PC-9 (cell line): ENCODE measurements at regions of chr5 and their contacts with region 1.

Region 1: GRCh38 chr5:34587355-34588241 is 68.5 kb upstream of the RAI14 start:
- DNase-seq: peak in 1 of 2 experiments; percentile 86
- H3K4me3 ChIP-seq: peak overlapping the region; percentile 51
- H3K27ac ChIP-seq: peak overlapping the region; percentile 97
- H3K4me1 ChIP-seq: peaks cover 76% of the 10 kb centered on the region
- H3K27me3 ChIP-seq: no peaks in the 10 kb centered on the region
- CTCF ChIP-seq: no peak

Region 2: GRCh38 chr5:34547300-34548085 is 40.1 kb before region 1 on chr5:
- CTCF ChIA-PET with region 1: no interaction called
- POLR2A ChIA-PET with region 1: no interaction called
- intact Hi-C with region 1: no loop called
- DNase-seq: no peak
- H3K4me3 ChIP-seq: no peak overlapping the region
- H3K27ac ChIP-seq: no peak overlapping the region
- H3K4me1 ChIP-seq: no peaks in the 10 kb centered on the region
- H3K27me3 ChIP-seq: no peaks in the 10 kb centered on the region
- CTCF ChIP-seq: no peak

Region 3: GRCh38 chr5:34563951-34564709 is 23.5 kb before region 1 on chr5:
- CTCF ChIA-PET with region 1: no interaction called
- POLR2A ChIA-PET with region 1: no interaction called
- intact Hi-C with region 1: loop called (anchors 1 kb)
- DNase-seq: peak; percentile 77 to 85
- H3K4me3 ChIP-seq: no peak overlapping the region
- H3K27ac ChIP-seq: peak overlapping the region; percentile 64
- H3K4me1 ChIP-seq: peaks cover 20% of the 10 kb centered on the region
- H3K27me3 ChIP-seq: no peaks in the 10 kb centered on the region
- CTCF ChIP-seq: no peak

Region 4: GRCh38 chr5:34598177-34598794 is 10.7 kb after region 1 on chr5:
- CTCF ChIA-PET with region 1: interaction called, 6 read pairs
- POLR2A ChIA-PET with region 1: interaction called, 25 read pairs
- intact Hi-C with region 1: loop called (anchors 1 kb)
- DNase-seq: peak; percentile 69 to 98
- H3K4me3 ChIP-seq: peak overlapping the region; percentile 6; the same call in 1 of the 2 replicates
- H3K27ac ChIP-seq: peak overlapping the region; percentile 88
- H3K4me1 ChIP-seq: peaks cover 43% of the 10 kb centered on the region
- H3K27me3 ChIP-seq: no peaks in the 10 kb centered on the region
- CTCF ChIP-seq: no peak

Region 5: GRCh38 chr5:34608859-34609648 is 21.5 kb after region 1 on chr5:
- CTCF ChIA-PET with region 1: no interaction called
- POLR2A ChIA-PET with region 1: interaction called, 9 read pairs
- intact Hi-C with region 1: loop called (anchors 1 kb)
- DNase-seq: peak; percentile 43 to 94
- H3K4me3 ChIP-seq: peak overlapping the region; percentile 12; the same call in 1 of the 2 replicates
- H3K27ac ChIP-seq: peak overlapping the region; percentile 82
- H3K4me1 ChIP-seq: peaks cover 39% of the 10 kb centered on the region
- H3K27me3 ChIP-seq: no peaks in the 10 kb centered on the region
- CTCF ChIP-seq: no peak

Region 6: DNA sequence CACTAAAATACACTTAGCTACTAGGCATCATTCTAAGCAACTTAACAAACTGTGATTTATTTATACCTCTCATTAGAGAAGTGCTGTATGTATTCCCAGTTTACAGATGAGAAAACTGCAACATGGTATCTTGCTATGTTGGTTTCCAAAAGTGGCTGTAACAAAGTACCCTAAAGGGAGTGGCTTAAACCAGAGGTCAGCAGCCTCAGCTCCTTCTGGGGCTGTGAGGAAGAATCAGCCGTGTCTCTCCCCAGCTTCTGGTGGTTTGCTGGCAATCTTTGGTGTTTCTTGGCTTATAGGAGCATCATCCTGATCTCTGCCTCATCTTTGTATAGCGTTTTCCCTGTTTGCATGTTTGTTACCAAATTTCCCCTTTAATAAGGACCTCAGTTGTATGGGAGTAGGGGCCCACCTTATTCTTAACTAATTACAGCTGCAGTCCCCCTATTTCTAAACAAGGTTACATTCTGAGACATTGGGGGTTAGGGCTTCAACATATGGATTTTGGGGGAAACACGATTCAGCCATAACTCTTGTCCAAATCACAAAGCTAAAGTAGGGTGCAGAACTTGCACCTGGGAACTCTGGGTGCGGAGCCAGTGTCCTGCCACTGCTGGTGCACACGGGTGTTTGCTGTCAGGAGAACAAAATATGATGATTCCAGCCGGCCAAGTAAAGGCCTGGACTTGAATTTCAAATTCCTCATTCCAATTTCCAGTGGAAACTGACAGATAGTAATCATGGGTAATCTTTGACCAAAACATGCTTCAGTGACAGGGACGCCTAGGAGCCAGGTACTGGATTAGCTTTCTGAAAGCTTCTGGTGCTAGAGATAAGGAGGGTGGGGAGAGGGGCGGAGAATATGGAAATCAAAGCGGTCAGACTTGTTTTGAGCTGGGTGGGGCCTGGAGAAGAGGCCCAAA is 111.8 kb after region 1 on chr5:
- CTCF ChIA-PET with region 1: no interaction called
- POLR2A ChIA-PET with region 1: interaction called, 11 read pairs
- intact Hi-C with region 1: no loop called
- DNase-seq: peak in 1 of 2 experiments; percentile 76
- H3K4me3 ChIP-seq: no peak overlapping the region
- H3K27ac ChIP-seq: peak overlapping the region; percentile 16; the same call in 1 of the 2 replicates
- H3K4me1 ChIP-seq: peaks cover 46% of the 10 kb centered on the region
- H3K27me3 ChIP-seq: no peaks in the 10 kb centered on the region
- CTCF ChIP-seq: no peak

Region 7: GRCh38 chr5:34915139-34915855 is 327.7 kb after region 1 on chr5 and contains the starts of genes BRIX1 and RAD1:
- CTCF ChIA-PET with region 1: no interaction called
- POLR2A ChIA-PET with region 1: no interaction called
- intact Hi-C with region 1: loop called (anchors 5 kb)
- DNase-seq: peak; percentile 95 to 100
- H3K4me3 ChIP-seq: peak within 1 kb of the TSS; percentile 81
- H3K27ac ChIP-seq: peak within 1 kb of the TSS; percentile 73
- H3K4me1 ChIP-seq: peaks cover 42% of the 10 kb centered on the region
- H3K27me3 ChIP-seq: no peaks in the 10 kb centered on the region
- CTCF ChIP-seq: 0 out of 2 replicates have a peak, but pooled peaks have one; percentile 39
- total RNA-seq, gene BRIX1: 71.9 and 73.4 TPM in 2 replicates
- total RNA-seq, gene RAD1: 43.8 and 63.0 TPM in 2 replicates